A549 (cell line): ENCODE measurements at regions of chr15 and their contacts with region 1.

Region 1: DNA sequence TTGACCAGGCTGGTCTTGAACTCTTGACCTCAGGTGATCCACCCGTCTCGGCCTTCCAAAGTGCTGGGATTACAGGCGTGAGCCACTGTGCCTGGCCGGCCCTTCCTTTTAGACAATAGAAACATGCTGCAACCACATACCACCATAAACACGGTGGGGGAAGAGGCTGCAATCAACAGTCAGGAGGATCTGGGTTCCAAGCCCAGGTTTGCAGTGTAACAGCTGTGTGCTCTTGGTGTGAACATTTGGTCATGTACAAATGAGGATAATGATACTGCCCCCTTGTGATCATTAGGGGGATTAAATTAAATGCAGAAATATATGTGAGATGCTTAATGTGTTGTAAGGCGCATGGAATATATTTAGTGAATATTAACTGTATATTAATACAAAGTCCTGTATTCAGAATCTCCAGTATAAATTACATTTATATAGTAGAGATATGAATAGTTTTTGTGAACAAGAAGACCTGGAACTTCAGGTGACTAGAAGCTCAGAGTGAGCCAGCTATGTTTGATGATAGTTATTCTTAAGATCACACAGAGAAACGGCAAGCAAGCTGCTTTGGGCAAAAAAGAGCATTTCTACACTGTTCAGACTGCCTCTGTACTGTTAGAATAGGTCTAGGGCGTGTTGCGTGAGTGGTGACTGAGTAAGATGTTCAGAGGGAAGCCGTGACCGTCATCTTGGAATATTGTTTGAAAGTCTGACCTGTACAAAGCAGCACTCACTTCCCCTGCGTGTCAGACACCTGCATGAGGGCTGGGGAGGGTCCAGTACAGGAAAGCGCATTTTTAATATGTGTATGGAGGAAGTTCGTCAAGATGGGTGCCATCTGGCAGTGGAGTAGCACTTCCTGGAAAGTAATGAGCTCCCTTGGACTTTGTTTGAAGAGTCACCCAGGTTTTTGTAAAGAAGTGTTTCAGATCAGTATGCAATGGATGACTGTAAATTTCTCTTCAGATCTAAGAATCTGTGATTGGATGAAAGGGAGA is 125.8 kb downstream of the PGPEP1L start:
- DNase-seq: peak in 1 of 2 experiments; percentile 84
- ATAC-seq: peak; percentile 33 to 51; a peak in 3 of 6 replicates
- H3K4me3 ChIP-seq: no peak overlapping the region
- H3K27ac ChIP-seq: peak overlapping the region; percentile 95 to 97
- H3K4me1 ChIP-seq: peaks cover 96% of the 10 kb centered on the region
- CTCF ChIP-seq: peak; percentile 57
- EP300 ChIP-seq: no peak
- POLR2A ChIP-seq: no peak
- RAD21 ChIP-seq: peak; percentile 69 to 72

Region 2: GRCh38 chr15:98413933-98414546 is 467.8 kb before region 1 on chr15:
- CTCF ChIA-PET with region 1: no interaction called
- POLR2A ChIA-PET with region 1: no interaction called
- DNase-seq: no peak
- ATAC-seq: no peak
- H3K4me3 ChIP-seq: no peak overlapping the region
- H3K27ac ChIP-seq: no peak overlapping the region
- H3K4me1 ChIP-seq: peaks cover 6% of the 10 kb centered on the region; the same call in 1 of the 3 replicates
- CTCF ChIP-seq: no peak
- EP300 ChIP-seq: no peak
- POLR2A ChIP-seq: no peak
- RAD21 ChIP-seq: no peak

Region 3: GRCh38 chr15:98865397-98866339 is 16.2 kb before region 1 on chr15:
- CTCF ChIA-PET with region 1: interaction called, 83 read pairs
- POLR2A ChIA-PET with region 1: interaction called, 3 read pairs
- DNase-seq: peak in 1 of 2 experiments; percentile 94
- ATAC-seq: peak; percentile 76 to 82
- H3K4me3 ChIP-seq: peak overlapping the region; percentile 35
- H3K27ac ChIP-seq: peak overlapping the region; percentile 95 to 97
- H3K4me1 ChIP-seq: peaks cover 96% of the 10 kb centered on the region
- CTCF ChIP-seq: no peak
- EP300 ChIP-seq: no peak
- POLR2A ChIP-seq: peak; percentile 18
- RAD21 ChIP-seq: no peak

Region 4: GRCh38 chr15:98896802-98897732 is 15.2 kb after region 1 on chr15:
- CTCF ChIA-PET with region 1: interaction called, 79 read pairs
- POLR2A ChIA-PET with region 1: no interaction called
- DNase-seq: peak; percentile 99 to 100
- ATAC-seq: peak; percentile 90 to 91
- H3K4me3 ChIP-seq: peak overlapping the region; percentile 14; the same call in 2 of the 3 replicates
- H3K27ac ChIP-seq: peak overlapping the region; percentile 95 to 97
- H3K4me1 ChIP-seq: peaks cover 94% of the 10 kb centered on the region
- CTCF ChIP-seq: no peak
- EP300 ChIP-seq: peak; percentile 100
- POLR2A ChIP-seq: no peak
- RAD21 ChIP-seq: peak; percentile 46 to 58; a peak in 4 of 5 replicates